PC-9 (cell line): ENCODE measurements at regions of chr22 and their contacts with region 1.

Region 1: DNA sequence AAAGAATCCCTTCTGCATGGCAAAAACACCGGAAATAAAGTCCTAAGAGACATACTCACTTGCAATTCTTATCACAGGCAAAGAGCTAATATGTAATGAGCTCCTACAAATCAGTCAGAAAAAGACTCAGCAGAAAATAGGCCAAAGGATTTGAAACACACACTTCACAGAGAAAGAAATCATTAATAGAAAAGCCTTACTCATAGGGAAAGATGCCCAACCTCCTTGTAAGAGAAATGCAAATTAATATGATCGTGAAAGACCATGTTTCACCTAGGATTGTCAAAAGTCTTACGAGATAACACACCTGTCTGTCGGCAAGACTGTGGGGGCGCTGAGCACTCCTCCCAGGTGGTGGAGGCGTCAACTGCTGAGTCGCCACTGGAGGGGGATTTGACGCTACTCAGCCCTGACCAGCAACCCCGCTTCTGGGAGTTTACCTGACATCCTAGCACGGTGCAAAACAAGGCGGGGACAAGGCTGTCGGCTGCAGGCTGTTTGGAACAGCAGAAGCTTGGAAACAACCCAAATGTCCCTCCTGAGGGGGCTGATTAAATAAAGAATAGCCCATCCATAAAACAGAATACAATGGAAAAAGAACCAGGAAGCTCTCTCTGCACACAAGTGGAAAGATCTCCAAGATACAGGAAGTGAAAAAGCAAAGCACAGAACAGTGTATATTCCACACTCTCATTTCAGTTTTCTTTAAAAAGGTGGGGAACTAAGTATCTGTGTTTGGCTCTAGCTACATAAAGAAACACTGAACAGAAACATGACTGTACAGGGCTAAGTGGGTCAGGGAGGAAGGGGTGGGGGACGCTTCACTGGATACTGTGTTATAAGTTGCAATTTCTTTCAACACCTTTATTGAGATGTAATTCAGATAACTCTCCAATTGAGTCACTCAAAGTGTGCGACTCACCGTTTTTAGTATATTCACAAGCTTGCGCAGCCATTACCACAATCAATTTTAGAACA is 11.5 kb downstream of the CSNK1E start:
- DNase-seq: peak; percentile 52 to 89
- H3K4me3 ChIP-seq: peak overlapping the region; percentile 12; the same call in 1 of the 2 replicates
- H3K27ac ChIP-seq: peak overlapping the region; percentile 86
- H3K4me1 ChIP-seq: peaks cover 74% of the 10 kb centered on the region
- H3K27me3 ChIP-seq: no peaks in the 10 kb centered on the region
- CTCF ChIP-seq: no peak

Region 2: DNA sequence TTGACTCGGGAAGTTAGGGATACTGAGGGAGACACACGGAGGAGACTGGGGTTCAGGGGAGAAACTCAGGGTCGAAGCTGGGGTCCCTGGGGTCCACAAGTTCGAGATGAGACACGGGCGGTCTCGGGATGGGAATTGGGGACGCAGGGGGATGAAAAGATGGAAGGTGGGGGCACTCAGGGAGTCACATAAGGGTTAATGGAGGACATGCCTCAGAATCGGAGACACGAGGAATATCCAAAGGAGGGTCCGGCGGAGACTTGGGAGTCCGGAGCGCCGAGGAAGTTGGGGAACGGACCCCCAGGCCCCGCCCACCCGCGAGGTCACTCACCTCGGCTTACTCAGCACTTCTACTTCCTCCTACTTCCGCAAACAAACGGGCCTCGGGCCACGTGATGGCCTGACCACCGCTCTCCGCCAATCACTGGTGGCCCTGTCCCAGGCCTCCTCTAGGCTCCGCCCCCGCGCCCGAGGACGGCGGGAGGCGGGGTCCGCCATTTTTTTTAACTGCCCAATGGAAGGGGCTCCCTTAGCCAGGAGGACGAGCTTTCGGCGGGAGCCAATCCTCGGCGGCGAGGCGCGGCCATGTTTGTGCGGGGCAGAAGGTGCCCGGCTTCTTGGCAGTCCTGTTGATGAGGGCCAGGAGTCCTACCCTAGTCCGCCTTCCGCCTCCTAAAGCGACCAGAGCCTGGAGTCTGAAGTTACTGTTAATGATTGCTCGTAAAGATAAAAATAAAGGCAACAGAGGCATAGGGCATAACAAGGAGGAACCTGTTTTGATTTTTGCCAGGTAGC is 124.1 kb before region 1 on chr22 and contains the start of gene PLA2G6:
- CTCF ChIA-PET with region 1: no interaction called
- POLR2A ChIA-PET with region 1: interaction called, 11 read pairs
- intact Hi-C with region 1: no loop called
- DNase-seq: peak; percentile 99 to 100
- H3K4me3 ChIP-seq: peak within 1 kb of the TSS; percentile 66
- H3K27ac ChIP-seq: peak within 1 kb of the TSS; percentile 98
- H3K4me1 ChIP-seq: peaks cover 78% of the 10 kb centered on the region
- H3K27me3 ChIP-seq: no peaks in the 10 kb centered on the region
- CTCF ChIP-seq: no peak
- total RNA-seq, gene PLA2G6: 39.8 and 45.6 TPM in 2 replicates

Region 3: GRCh38 chr22:38338772-38339379 is 33.1 kb after region 1 on chr22:
- CTCF ChIA-PET with region 1: no interaction called
- POLR2A ChIA-PET with region 1: interaction called, 13 read pairs
- intact Hi-C with region 1: no loop called
- DNase-seq: no peak
- H3K4me3 ChIP-seq: no peak overlapping the region
- H3K27ac ChIP-seq: no peak overlapping the region
- H3K4me1 ChIP-seq: peaks cover 21% of the 10 kb centered on the region
- H3K27me3 ChIP-seq: no peaks in the 10 kb centered on the region
- CTCF ChIP-seq: no peak

Region 4: GRCh38 chr22:39727541-39727940 is 1421.8 kb after region 1 on chr22:
- CTCF ChIA-PET with region 1: no interaction called
- POLR2A ChIA-PET with region 1: no interaction called
- intact Hi-C with region 1: no loop called
- DNase-seq: peak in 1 of 2 experiments; percentile 52
- H3K4me3 ChIP-seq: no peak overlapping the region
- H3K27ac ChIP-seq: no peak overlapping the region
- H3K4me1 ChIP-seq: no peaks in the 10 kb centered on the region
- H3K27me3 ChIP-seq: peaks cover 51% of the 10 kb centered on the region
- CTCF ChIP-seq: no peak